Activated naive CD4-positive, alpha-beta T cell treated with anti-CD3 and anti-CD28 coated beads for 36 hours (primary cell): ENCODE measurements at regions of chr15 and their contacts with region 1.

Region 1: DNA sequence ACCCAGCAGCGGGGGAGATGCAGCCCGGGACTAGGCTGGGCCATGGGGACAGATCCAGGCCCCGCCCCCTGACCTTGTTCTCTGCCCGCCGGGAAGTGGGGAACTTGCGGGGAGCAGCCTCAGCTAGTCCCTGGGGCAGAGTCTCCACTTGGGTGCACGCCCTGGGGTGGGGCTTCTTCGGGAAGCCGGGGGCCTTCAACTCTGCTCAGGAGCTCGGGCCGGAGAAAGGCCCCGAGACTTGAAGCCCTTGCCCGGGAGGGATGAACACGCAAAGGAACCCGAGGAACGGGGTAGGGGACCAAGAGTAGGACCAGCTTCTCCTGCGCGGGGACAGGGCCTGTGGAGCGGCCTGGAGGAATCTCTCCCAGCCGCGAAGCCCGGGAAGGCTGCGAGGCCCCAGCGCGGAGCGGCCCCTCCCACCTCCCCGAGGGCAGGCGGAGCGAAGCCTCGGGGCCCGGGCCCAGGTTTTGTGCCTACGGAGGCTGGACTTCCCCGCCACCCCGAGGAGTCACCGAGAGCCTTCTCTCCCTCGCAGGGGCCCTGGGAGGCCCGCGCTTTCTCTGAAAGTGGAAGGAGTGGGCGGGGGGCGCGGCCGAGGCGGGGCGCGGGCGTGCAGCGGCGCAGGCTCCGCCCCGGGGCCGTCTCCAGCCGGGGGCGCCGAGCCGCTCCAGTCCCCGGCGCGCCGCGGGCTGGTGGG is at the start of gene ITPKA:
- DNase-seq: peak; percentile 95
- H3K4me3 Mint-ChIP-seq: peak within 1 kb of the TSS; percentile 59
- H3K27ac Mint-ChIP-seq: peak within 1 kb of the TSS; percentile 3
- H3K4me1 Mint-ChIP-seq: peaks cover 32% of the 10 kb centered on the region
- H3K27me3 Mint-ChIP-seq: peaks cover 38% of the 10 kb centered on the region
- total RNA-seq, gene ITPKA: 1.0 to 1.7 TPM

Region 2: DNA sequence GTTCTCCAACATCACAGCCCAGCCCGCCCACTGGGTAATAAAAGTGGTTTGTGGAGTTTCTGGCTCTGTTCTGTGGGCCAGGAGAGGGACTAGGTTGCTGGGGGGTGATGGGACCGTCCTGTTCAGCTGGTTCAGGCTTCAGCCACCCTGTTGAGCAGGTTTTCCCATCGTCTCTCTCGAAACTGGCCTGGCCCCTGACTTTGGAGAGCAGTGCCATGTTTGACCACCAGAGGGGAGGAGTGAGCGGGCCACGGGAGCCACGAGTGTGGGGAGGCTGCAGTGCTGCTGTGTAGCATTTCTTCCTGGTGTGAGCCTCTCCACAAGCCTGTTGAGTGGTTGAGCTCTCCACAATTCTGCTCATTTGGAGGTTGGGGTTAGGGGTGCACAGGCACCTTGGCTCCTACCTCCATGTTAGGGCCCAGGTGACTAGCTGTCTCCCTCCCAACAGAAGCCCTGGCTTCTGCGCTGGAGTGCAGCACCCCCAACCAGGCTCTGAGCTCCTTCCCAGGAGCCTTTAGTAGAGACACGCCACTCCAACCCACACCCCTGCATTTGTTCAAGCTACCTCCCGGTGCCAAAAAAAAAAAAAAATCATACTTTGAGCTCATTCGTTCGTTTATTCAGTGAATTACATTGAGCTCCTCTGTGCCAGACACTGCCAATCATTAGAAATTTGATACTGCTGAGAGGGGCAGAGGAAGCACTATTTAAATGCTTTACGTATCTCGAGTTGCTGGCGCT is 635.6 kb before region 1 on chr15:
- CTCF ChIA-PET with region 1: no interaction called
- intact Hi-C with region 1: no loop called
- DNase-seq: peak; percentile 85
- H3K4me3 Mint-ChIP-seq: no peak overlapping the region
- H3K27ac Mint-ChIP-seq: no peak overlapping the region
- H3K4me1 Mint-ChIP-seq: peaks cover 11% of the 10 kb centered on the region
- H3K27me3 Mint-ChIP-seq: no peaks in the 10 kb centered on the region

Region 3: DNA sequence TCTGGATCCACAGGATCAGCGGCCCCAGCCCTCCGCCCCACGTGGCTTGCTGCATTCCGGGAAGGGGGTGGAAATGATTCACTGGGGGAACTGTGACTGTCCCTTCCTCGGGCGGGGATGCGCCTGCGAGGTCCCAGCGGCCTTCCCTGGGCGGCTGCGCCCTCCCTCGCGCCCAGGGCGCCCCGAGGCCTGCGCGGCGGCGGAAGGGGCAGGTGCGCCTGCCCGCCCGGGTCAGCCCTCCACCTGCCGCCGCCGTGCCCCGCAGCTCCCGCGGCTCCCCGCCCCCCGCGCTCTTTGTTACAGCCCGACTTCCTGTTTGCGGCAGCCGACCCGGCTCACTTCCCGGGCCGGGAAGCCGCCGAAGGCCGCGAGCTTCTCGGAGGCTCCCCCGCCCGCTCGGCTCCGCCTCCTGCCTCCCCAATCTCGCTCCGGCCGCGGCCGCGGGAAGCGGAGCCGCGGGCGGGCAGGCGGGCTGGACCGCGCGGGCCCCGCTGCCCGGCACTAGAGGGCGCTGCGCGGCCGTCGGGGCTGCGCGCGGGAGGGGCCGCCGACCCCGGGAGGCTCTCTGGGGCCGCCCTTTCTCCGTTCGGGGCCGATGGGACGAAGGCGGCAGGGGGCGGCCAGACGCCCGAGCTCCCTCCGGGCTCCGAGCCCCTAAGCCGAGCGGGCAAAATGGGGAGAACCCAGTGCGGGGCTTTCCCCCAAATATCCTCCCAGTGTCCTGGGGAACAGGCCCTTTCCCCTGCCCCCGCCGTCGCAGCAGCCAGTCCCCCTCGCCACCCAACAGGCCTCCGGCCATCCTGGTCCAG is 551.6 kb before region 1 on chr15:
- CTCF ChIA-PET with region 1: no interaction called
- intact Hi-C with region 1: loop called (anchors 1 kb)
- DNase-seq: peak; percentile 80
- H3K4me3 Mint-ChIP-seq: peak overlapping the region; percentile 82
- H3K27ac Mint-ChIP-seq: peak overlapping the region; percentile 78
- H3K4me1 Mint-ChIP-seq: peaks cover 32% of the 10 kb centered on the region
- H3K27me3 Mint-ChIP-seq: no peaks in the 10 kb centered on the region

Region 4: DNA sequence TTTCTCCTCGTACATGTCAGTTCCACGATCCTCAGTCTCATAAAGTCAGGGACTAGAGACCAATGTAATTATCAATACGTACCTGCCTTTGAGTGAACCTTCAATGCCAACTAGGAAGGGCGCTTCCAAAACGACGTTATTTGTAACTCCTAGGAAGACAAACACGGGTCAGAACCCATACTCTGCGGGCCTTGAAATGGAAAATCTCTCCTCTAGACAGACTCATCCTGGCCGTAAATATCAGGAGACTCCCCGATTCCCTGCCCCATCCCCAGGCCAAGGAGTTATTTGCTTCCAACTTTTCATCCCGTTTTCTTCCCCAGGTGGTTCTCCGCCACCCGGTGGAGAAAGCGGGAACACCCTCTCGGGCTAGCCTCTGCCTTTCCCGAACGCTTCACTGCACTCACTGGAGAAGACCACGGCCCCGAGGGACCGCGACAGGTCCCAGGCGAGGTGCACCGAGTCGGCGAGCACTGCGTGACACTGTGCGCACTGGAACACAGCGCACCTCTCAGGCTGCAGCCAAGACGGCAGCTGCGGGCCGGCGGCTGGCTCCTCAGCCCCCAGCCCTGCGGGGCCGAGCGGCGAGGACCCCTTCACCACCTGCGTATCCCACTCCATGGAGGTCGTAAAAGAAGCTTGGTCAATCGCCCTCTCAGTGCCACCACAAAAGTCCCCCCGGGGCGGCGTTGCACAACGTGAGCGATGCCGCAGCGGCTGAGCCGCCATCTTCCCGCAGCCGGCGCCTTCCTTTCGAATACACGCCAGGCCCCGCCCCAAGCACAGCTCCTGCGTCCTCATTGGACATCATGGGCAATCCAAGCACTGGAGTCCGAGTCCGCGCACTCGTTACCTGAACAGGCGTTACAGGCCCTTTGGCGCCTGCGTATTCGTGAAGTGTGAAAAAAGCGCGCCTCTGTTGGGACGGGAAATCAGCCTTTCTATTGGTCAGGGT is 161.2 kb before region 1 on chr15 and contains the start of gene OIP5:
- CTCF ChIA-PET with region 1: no interaction called
- intact Hi-C with region 1: loop called (anchors 2 kb)
- DNase-seq: peak; percentile 100
- H3K4me3 Mint-ChIP-seq: peak within 1 kb of the TSS; percentile 100
- H3K27ac Mint-ChIP-seq: peak within 1 kb of the TSS; percentile 98
- H3K4me1 Mint-ChIP-seq: peaks cover 26% of the 10 kb centered on the region
- H3K27me3 Mint-ChIP-seq: no peaks in the 10 kb centered on the region
- total RNA-seq, gene OIP5: 9.5 to 10.7 TPM

Region 5: GRCh38 chr15:41416742-41417406 is 76.5 kb before region 1 on chr15 and contains the start of gene RTF1:
- CTCF ChIA-PET with region 1: no interaction called
- intact Hi-C with region 1: loop called (anchors 5 kb)
- DNase-seq: peak; percentile 95
- H3K4me3 Mint-ChIP-seq: peak within 1 kb of the TSS; percentile 87
- H3K27ac Mint-ChIP-seq: peak within 1 kb of the TSS; percentile 89
- H3K4me1 Mint-ChIP-seq: peaks cover 43% of the 10 kb centered on the region
- H3K27me3 Mint-ChIP-seq: no peaks in the 10 kb centered on the region
- total RNA-seq, gene RTF1: 18.7 to 19.5 TPM

Region 6: DNA sequence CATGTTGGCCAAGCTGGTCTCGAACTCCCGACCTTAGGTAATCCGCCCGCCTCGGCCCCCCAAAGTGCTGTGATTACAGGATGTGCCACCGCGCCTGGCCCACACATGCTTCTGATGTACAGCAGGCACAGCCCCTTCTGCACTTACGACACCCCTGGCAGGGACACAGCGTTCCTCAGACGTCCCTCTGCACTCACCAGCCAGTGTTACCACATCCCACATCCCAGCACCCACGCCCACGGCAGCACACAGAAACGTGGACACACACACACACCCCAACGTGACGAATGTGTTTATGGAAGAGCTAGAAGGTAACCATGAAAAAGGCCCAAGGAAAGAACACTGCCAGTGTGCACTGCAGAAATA is 51.3 kb after region 1 on chr15:
- CTCF ChIA-PET with region 1: no interaction called
- intact Hi-C with region 1: loop called (anchors 2 kb)
- DNase-seq: no peak
- H3K4me3 Mint-ChIP-seq: peak overlapping the region; percentile 95
- H3K27ac Mint-ChIP-seq: peak overlapping the region; percentile 71
- H3K4me1 Mint-ChIP-seq: peaks cover 13% of the 10 kb centered on the region
- H3K27me3 Mint-ChIP-seq: no peaks in the 10 kb centered on the region

Region 7: DNA sequence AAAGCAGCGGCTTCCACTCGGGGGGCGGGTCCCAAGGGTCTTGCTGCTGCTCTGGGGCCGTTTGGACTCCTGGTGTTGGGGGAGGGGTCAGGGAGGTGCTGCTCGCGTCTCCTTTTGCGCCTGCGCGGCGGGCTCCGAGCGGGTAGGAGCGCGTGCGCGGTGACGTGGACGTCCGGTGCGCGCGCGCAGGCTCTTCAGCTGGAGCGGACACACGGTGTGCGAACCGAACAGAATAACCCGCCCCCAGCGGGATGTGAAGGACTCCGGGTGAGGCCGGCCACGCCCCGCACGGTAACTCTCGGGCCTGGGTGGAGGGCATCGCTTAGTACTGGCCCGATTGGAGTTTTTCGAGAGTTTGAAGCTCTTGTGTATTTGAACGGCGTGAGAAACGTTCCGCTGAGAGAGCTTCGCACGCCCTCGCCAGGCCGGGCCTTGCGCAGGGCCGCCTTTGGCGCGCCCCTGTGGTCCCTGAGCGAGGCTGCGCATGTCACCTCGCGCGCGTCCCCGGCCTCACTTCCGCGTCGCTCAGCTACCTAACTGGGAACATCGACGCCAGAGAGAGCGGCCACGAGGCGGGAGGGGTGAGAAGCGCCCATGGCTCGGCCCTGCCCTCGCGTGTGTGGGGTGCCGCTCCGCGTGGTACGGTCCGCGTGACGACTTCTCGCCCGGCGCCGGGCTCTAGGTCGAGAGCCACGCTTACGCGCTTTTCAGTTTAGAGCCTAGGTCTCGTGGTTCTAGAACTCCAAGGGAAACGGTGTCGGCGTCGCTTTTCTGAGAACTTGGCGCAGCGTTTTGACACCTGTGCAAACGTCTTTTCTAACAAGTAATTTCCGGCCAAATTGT is 167.1 kb after region 1 on chr15 and contains the start of gene MGA:
- CTCF ChIA-PET with region 1: no interaction called
- intact Hi-C with region 1: loop called (anchors 1 kb)
- DNase-seq: peak; percentile 84
- H3K4me3 Mint-ChIP-seq: peak within 1 kb of the TSS; percentile 95
- H3K27ac Mint-ChIP-seq: peak within 1 kb of the TSS; percentile 81
- H3K4me1 Mint-ChIP-seq: peaks cover 32% of the 10 kb centered on the region
- H3K27me3 Mint-ChIP-seq: peaks cover 2% of the 10 kb centered on the region
- total RNA-seq, gene MGA: 27.4 to 28.3 TPM

Region 8: DNA sequence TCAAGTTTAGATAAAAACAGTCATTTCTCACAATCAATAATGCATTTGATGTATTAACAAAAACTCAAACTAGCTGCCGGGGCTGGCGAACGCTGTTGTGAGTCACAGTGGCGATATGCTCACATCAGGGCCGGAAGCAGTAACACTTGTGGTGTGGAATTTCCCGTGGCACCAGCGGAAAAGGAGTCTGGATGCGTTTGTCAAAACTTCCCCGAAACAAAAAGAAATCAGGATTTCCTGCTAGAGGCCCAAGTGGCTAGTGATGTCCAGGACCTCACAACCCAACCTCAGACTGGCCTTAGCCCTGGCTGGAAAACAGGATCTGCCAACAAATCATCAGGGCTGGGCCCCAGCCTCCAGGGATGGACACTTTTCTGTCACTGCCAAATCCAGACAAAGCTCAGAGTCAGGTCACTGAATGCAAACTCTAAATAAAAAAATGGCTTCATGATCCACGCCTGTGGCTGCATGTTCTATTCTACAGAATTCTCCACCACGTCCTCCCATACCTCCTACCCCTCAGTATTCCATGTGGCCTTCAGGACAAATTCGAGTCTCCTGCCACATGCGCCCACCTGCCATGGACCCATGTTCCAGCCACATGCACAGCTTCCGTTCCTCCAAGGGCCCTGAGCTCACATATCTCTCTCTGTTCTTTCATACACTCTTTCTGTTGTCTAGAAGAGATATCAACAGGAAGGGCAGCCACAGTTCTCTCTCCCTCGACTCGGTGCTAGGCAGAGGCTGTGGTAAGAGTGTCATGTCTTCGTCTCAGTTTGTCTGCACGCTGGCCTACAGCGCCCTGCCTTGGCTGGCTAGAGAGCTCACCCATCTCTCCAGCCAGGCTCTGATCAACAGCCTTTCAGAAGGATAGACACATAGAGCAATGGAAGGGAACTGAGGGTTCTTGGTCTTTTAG is 443.6 kb after region 1 on chr15:
- CTCF ChIA-PET with region 1: no interaction called
- intact Hi-C with region 1: loop called (anchors 5 kb)
- DNase-seq: peak; percentile 95
- H3K4me3 Mint-ChIP-seq: peak overlapping the region; percentile 68
- H3K27ac Mint-ChIP-seq: peak overlapping the region; percentile 100
- H3K4me1 Mint-ChIP-seq: peaks cover 71% of the 10 kb centered on the region
- H3K27me3 Mint-ChIP-seq: no peaks in the 10 kb centered on the region